Activated B cell treated with CpG ODN at 0.5 μM for 24 hours (primary cell): ENCODE measurements at regions of chr7 and their contacts with region 1.

Region 1: GRCh38 chr7:66493235-66494181 is 135.2 kb upstream of the KCTD7 start:
- DNase-seq: peak; percentile 94
- ATAC-seq: peak; percentile 91
- H3K4me3 Mint-ChIP-seq: peak overlapping the region; percentile 91
- H3K27ac Mint-ChIP-seq: peak overlapping the region; percentile 96
- H3K4me1 Mint-ChIP-seq: peaks cover 16% of the 10 kb centered on the region
- H3K27me3 Mint-ChIP-seq: no peaks in the 10 kb centered on the region
- CTCF ChIP-seq: no peak

Region 2: DNA sequence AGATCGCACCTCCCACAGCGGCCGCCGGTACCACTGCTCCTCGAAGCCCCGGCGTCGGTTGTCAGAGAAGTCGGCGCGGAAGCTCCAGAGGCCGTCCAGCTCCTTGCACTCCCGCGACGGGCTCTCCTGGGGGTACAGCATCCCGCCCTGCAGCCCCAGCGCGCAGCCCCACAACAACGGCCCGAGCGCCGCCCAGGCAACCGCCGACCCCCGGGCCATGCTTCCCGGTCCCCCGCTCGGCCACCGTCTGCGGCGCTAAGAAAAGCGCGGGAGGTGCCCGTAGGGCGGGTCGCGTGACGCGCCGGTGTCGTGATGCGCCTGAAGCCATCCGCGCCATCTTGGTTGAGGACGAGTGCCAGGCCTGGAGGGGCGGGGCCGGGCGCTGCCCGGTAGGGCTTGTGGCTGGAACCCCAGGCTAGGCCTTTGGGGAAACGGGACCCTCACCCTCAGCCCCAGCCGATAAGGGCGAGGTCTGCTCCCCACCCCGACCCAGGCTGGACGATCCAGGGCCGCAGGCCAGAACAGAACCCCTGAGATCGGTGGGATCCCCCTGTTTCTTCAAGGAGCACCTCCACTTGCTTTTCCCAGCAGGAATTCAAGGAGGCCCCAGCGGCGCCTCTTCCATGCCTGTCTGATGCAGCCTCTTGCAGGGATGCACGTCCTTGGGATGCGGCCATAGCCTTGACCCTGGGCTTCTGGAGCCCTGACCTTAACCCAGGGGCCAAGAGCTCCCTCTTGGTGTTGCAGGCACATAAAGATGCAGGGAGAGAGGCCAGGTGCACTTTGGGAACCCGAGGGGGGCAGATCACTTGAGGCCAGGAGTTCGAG is 511.3 kb before region 1 on chr7 and contains the start of gene GUSB:
- CTCF ChIA-PET with region 1: no interaction called
- POLR2A ChIA-PET with region 1: interaction called, 6 read pairs
- intact Hi-C with region 1: loop called (anchors 1 kb)
- DNase-seq: peak; percentile 85
- ATAC-seq: peak; percentile 94
- H3K4me3 Mint-ChIP-seq: peak within 1 kb of the TSS; percentile 79
- H3K27ac Mint-ChIP-seq: peak within 1 kb of the TSS; percentile 46
- H3K4me1 Mint-ChIP-seq: peaks cover 19% of the 10 kb centered on the region
- H3K27me3 Mint-ChIP-seq: no peaks in the 10 kb centered on the region
- CTCF ChIP-seq: no peak
- total RNA-seq, gene GUSB: 33.6 and 40.8 TPM in 2 replicates

Region 3: DNA sequence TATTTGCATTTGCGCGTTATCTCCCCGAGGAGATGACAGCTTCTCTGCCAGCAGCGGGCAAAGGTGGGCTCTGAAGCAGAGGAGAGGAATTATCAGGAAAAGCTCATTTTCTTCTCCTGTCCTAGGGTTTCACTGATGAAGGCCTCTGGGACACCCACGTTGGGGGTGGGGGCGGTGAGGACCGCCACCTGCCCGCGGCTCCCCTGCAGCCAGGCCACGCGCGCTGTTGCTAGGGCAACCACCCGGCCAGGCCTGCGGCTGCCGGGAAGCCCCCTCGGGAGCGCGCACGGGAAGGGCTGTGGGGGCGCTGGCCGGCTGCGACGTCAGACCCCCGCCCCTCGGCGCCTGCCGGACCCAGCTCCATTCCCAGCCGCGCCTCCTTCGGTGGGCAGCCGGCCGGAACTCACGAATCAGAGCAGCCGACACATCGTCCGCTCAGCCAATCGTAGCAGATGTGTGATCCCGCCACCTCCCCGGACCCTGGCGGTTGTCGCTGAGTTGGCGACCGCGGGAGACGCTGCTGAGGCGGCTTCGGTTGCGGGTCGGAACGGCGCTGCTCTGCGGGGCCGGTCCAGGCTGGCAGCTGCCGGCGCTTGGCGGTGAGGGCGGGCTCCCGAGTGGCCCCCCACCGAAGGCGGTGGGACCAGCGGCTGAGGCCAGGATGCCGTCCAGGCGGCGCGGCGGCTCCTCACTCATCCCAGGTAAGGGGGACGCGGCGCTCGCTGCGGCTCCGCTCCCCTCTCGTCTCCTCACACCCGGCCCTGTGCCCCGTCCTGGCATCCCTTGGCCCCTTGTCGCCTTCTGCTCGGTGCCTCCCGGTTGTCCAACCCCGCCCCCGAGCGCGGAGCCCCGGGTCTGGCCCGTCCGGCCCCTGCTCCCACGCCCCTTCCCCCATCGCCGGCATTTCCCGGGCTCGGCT is 288.4 kb before region 1 on chr7 and contains the start of gene TPST1:
- CTCF ChIA-PET with region 1: no interaction called
- POLR2A ChIA-PET with region 1: interaction called, 11 read pairs
- intact Hi-C with region 1: loop called (anchors 1 kb)
- DNase-seq: peak; percentile 92
- ATAC-seq: peak; percentile 93
- H3K4me3 Mint-ChIP-seq: peak within 1 kb of the TSS; percentile 94
- H3K27ac Mint-ChIP-seq: peak within 1 kb of the TSS; percentile 85
- H3K4me1 Mint-ChIP-seq: peaks cover 43% of the 10 kb centered on the region
- H3K27me3 Mint-ChIP-seq: peaks cover 11% of the 10 kb centered on the region
- CTCF ChIP-seq: no peak
- total RNA-seq, gene TPST1: 5.6 and 6.5 TPM in 2 replicates

Region 4: GRCh38 chr7:66628361-66629140 is 135.0 kb after region 1 on chr7 and contains the start of gene KCTD7:
- CTCF ChIA-PET with region 1: no interaction called
- POLR2A ChIA-PET with region 1: interaction called, 6 read pairs
- intact Hi-C with region 1: loop called (anchors 1 kb)
- DNase-seq: peak; percentile 93
- ATAC-seq: peak; percentile 88
- H3K4me3 Mint-ChIP-seq: peak within 1 kb of the TSS; percentile 92
- H3K27ac Mint-ChIP-seq: peak within 1 kb of the TSS; percentile 91
- H3K4me1 Mint-ChIP-seq: peaks cover 45% of the 10 kb centered on the region
- H3K27me3 Mint-ChIP-seq: no peaks in the 10 kb centered on the region
- CTCF ChIP-seq: no peak
- total RNA-seq, gene KCTD7: 12.8 and 13.2 TPM in 2 replicates

Region 5: DNA sequence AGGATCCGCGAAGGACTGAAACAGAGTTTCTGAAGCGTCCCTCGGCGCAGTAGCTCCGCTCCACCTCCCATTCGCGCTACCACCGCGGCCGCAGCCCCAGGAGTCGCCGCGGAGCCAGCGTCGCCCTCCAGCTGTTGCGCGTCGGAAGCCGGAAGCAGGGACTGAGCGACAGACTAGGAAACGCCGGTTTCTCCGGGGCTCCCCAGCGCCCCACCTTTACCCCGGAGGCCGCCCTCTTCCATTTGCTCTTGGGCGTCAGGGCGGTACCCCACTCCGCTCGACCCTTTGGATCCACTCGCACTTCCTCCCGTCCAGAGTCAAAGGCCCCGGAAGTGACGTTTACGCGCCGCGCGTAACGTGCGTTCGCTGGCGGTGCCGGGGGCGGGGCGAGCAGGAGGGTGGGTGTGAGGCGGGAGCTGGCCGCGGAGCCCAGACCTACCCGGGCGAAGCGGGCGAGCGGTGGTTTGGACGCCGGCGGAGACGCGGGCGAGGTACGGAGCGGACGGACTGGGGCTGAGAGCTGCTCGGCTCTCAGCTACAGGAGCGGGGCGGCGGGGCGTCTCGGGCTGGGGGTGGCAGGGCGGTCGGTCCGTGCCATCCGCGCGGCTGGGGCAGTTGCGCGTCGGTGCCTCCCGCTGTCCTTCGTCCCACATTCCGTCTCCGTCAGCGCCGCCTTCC is 246.9 kb after region 1 on chr7 and contains the start of gene RABGEF1:
- CTCF ChIA-PET with region 1: no interaction called
- POLR2A ChIA-PET with region 1: interaction called, 9 read pairs
- intact Hi-C with region 1: loop called (anchors 1 kb)
- DNase-seq: peak; percentile 96
- ATAC-seq: peak; percentile 84
- H3K4me3 Mint-ChIP-seq: peak within 1 kb of the TSS; percentile 93
- H3K27ac Mint-ChIP-seq: peak within 1 kb of the TSS; percentile 94
- H3K4me1 Mint-ChIP-seq: peaks cover 74% of the 10 kb centered on the region
- H3K27me3 Mint-ChIP-seq: no peaks in the 10 kb centered on the region
- CTCF ChIP-seq: no peak
- total RNA-seq, gene RABGEF1: 19.7 and 21.1 TPM in 2 replicates

Region 6: DNA sequence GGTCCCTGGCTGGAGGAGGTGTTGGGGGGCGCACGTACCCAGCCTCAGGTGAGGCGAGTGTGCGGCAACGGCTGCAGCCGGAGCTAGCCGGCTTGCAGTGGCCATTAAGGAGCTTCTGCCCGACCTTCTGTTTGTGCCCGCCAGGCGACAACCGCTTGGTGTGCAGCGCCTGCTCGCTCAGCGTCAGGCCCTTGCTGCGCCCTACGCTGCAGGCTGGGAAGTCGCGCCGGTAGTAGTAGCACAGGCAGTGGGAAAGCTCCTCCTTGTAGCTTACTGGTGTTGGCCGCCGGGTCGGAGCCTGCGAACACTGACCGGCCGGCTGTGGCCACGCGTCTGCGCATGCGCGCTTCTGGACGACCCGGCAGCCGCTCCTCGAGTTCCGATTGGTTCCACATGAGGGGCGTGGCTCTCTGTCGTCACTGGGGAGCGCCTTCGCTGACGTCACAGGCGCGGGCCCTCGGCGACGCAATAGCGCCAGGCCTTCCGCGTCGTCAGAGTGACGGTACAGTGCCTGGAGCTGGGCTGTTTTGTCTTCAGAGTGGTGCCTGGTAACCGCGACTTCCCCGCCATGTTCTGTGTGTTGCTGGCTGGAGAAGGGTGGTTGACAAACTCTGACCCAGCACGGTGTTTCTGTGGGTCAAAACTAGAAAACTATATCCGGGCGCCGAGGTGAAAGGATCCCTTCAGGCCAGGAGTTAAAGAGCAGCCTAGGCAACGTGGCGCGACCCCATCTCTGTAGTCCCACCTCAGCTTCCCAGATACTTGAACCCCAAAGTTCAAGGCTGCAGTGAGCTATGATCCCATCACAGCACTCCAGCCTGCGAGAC is 351.3 kb after region 1 on chr7:
- CTCF ChIA-PET with region 1: no interaction called
- POLR2A ChIA-PET with region 1: interaction called, 24 read pairs
- intact Hi-C with region 1: loop called (anchors 1 kb)
- DNase-seq: peak; percentile 99
- ATAC-seq: peak; percentile 87
- H3K4me3 Mint-ChIP-seq: peak overlapping the region; percentile 98
- H3K27ac Mint-ChIP-seq: peak overlapping the region; percentile 99
- H3K4me1 Mint-ChIP-seq: peaks cover 29% of the 10 kb centered on the region
- H3K27me3 Mint-ChIP-seq: peaks cover 2% of the 10 kb centered on the region
- CTCF ChIP-seq: no peak

Region 7: DNA sequence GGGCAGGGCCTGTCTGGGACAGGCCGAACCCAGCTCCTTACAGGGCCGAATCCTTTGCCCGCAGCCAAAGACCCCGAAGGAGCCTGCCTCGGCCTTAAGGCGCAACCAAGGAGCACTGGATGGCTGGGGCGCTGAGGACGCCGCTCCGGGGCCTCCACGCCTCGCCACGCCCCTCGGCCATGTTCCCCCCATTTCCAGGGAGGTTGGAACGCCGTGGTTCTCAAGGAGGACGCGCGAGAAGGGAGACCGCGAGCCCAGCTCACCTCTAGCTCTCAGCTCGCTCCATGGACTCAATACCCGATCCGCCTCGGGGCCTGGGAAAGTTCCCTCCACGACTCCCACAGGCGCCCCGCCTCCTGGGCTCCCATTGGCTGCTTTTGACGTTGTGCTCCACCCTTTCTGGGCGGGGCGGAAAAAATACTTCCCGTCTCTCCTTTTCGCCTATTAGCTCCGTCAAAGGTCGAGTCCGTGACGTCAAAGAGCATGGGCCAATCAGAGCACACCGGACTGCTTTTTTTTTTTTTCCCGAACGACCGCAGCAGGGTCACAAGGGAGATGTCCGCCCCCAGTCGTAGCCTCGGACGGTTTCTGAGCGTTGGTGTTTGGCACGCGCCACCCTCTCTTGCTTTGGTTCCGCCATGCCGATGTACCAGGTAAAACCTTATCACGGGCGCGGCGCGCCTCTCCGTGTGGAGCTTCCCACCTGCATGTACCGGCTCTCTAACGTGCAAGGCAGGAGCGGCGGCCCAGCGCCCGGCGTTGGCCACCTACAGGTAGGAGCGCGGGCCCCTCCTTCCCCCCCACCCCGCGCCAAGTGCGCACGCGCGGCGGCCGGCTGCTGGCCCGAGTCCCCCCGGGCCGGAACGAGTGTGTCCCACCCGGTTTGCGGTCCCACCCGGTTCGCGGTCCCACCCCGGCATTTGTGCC is 808.9 kb after region 1 on chr7:
- CTCF ChIA-PET with region 1: no interaction called
- POLR2A ChIA-PET with region 1: no interaction called
- intact Hi-C with region 1: loop called (anchors 2 kb)
- DNase-seq: peak; percentile 95
- ATAC-seq: peak; percentile 86
- H3K4me3 Mint-ChIP-seq: peak overlapping the region; percentile 93
- H3K27ac Mint-ChIP-seq: peak overlapping the region; percentile 94
- H3K4me1 Mint-ChIP-seq: peaks cover 31% of the 10 kb centered on the region
- H3K27me3 Mint-ChIP-seq: no peaks in the 10 kb centered on the region
- CTCF ChIP-seq: no peak